ENCODE measurements at regions of chr16 and their contacts with region 1.

Region 1: GRCh38 chr16:53045341-53046220 is 7.1 kb downstream of the CHD9NB start:
- DNase-seq: no peak
- H3K4me3 ChIP-seq: no peak overlapping the region
- H3K27ac ChIP-seq: no peak overlapping the region
- H3K4me1 ChIP-seq: peaks cover 0 to 17% (median 8%) of the 10 kb centered on the region in 4 donors
- H3K27me3 ChIP-seq: peaks cover 0 to 20% of the 10 kb centered on the region in 2 donors
- CTCF ChIP-seq: no peak

Region 2: GRCh38 chr16:53224951-53225533 is 179.5 kb after region 1 on chr16:
- intact Hi-C with region 1: loop called (anchors 2 kb)
- DNase-seq: no peak
- H3K4me3 ChIP-seq: no peak overlapping the region
- H3K27ac ChIP-seq: no peak overlapping the region
- H3K4me1 ChIP-seq: peaks cover 0 to 33% (median 14%) of the 10 kb centered on the region in 4 donors
- H3K27me3 ChIP-seq: no peaks in the 10 kb centered on the region
- CTCF ChIP-seq: no peak

Measured in tibial artery (tissue), 4 donors.